K562 (cell line): ENCODE measurements at regions of chr9 and their contacts with region 1.

Region 1: GRCh38 chr9:108761655-108762347 is 94.0 kb downstream of the ACTL7B start:
- DNase-seq: peak; percentile 65 to 81 (median 78)
- ATAC-seq: peak; percentile 94
- H3K4me3 ChIP-seq: no peak overlapping the region
- H3K27ac ChIP-seq: no peak overlapping the region
- H3K4me1 ChIP-seq: no peaks in the 10 kb centered on the region
- H3K27me3 ChIP-seq: peaks cover 2 to 7% of the 10 kb centered on the region in 2 experiments; a peak in 3 of 5 replicates
- CTCF ChIP-seq: peak; percentile 67 to 92 (median 91)
- EP300 ChIP-seq: no peak
- POLR2A ChIP-seq: no peak
- RAD21 ChIP-seq: peak; percentile 70 to 84

Region 2: GRCh38 chr9:107425101-107426045 is 1336.4 kb before region 1 on chr9:
- CTCF ChIA-PET with region 1: no interaction called
- POLR2A ChIA-PET with region 1: no interaction called
- in situ Hi-C with region 1: loop called (anchors 10 kb)
- intact Hi-C with region 1: loop called (anchors 5 kb)
- DNase-seq: peak; percentile 54 to 73 (median 66)
- ATAC-seq: peak; percentile 93
- H3K4me3 ChIP-seq: no peak overlapping the region
- H3K27ac ChIP-seq: no peak overlapping the region
- H3K4me1 ChIP-seq: peaks cover 0 to 7% of the 10 kb centered on the region in 2 experiments; a peak in 2 of 5 replicates
- H3K27me3 ChIP-seq: peaks cover 3 to 25% of the 10 kb centered on the region in 2 experiments; a peak in 4 of 5 replicates
- CTCF ChIP-seq: peak; percentile 72 to 93 (median 74); a peak in 5 of 6 replicates
- EP300 ChIP-seq: no peak
- POLR2A ChIP-seq: no peak
- RAD21 ChIP-seq: peak in 1 of 2 experiments; percentile 52; a peak in 2 of 4 replicates

Region 3: DNA sequence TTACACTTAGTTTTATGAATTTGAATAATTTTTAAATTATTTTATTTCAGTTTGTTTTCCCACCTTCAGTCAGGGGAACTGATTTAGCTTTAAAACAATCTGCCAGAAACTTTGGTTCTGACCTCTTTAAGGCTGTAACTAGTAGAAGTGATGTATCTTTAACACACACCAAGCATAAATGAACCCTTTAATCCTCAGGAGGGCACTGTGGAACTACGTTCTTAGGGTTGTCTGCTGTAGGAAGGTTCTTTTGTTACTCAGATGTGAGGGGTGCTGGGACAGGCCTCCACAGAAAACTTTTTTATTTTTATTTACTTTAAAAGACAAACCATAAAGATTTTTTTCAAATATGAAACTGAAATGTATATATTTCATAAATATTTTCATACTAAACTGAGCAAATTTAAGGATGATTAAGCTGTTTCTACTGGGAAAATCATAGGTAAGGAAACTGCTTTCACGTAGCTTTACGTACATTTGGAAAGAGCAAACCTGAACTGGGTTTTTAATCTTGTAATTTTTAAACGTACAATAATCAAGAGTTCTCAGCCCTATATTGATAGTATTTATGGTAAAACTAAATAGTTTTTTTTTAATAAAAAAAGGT is 1277.6 kb before region 1 on chr9:
- CTCF ChIA-PET with region 1: no interaction called
- POLR2A ChIA-PET with region 1: no interaction called
- in situ Hi-C with region 1: no loop called
- intact Hi-C with region 1: loop called (anchors 5 kb)
- DNase-seq: peak; percentile 27 to 56 (median 40)
- ATAC-seq: peak; percentile 89
- H3K4me3 ChIP-seq: no peak overlapping the region
- H3K27ac ChIP-seq: no peak overlapping the region
- H3K4me1 ChIP-seq: peaks cover 0 to 11% of the 10 kb centered on the region in 2 experiments; a peak in 3 of 5 replicates
- H3K27me3 ChIP-seq: peaks cover 0 to 7% of the 10 kb centered on the region in 2 experiments; a peak in 1 of 5 replicates
- CTCF ChIP-seq: peak; percentile 31 to 66 (median 53); a peak in 5 of 6 replicates
- EP300 ChIP-seq: no peak
- POLR2A ChIP-seq: no peak
- RAD21 ChIP-seq: peak; percentile 84 to 93

Region 4: DNA sequence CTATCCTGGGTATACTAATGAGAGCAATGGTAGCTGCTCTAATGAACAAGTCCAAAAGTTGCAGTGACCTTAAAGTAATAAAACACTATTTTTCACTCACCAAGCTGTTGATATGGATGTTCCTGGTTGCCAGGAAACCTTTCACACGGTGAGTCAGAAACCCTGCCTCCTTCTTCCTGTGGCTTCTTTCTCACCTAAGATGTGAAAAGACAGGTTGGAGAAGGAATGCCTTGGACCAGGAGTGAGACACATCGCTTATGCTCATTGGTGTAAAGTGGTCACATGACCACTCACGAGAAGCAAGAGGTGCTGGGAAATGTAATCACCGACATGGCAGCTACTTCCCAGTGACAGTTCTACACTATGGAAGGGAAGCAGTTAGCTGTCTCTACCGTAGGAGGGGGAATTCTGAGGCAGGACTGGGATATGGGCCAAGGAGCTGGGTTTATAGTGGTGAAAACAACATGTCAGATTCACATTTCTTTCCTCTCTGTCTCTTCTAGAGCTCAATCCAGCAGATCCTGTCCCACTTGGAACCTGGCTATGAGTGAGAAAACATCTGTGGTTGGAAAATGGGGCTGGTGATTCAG is 951.8 kb before region 1 on chr9:
- CTCF ChIA-PET with region 1: no interaction called
- POLR2A ChIA-PET with region 1: no interaction called
- in situ Hi-C with region 1: no loop called
- intact Hi-C with region 1: no loop called
- DNase-seq: peak in 3 of 4 experiments; percentile 20 to 38 (median 22)
- ATAC-seq: peak; percentile 70
- H3K4me3 ChIP-seq: no peak overlapping the region
- H3K27ac ChIP-seq: no peak overlapping the region
- H3K4me1 ChIP-seq: no peaks in the 10 kb centered on the region
- H3K27me3 ChIP-seq: peaks cover 4 to 7% of the 10 kb centered on the region in 2 experiments; a peak in 3 of 5 replicates
- CTCF ChIP-seq: no peak
- EP300 ChIP-seq: no peak
- POLR2A ChIP-seq: no peak
- RAD21 ChIP-seq: no peak

Region 5: DNA sequence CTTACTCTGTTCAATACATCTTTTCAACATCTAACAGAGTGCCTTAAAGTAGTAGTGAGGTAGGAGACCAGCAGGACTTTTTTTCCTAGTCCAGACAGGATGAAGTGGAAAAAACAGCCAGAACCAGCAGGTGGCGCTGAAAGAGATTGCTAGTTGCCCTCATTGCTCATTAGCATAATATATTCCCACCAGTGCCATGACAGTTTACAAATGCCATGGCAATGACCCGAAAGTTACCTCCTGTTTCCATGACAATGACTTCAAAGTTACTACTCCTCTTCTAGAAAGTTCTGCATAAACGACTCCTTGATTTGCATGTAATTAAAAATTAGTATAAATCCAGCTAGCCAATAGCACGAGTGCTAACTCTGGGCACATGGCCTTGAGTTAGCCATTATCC is 293.4 kb before region 1 on chr9:
- CTCF ChIA-PET with region 1: no interaction called
- POLR2A ChIA-PET with region 1: no interaction called
- in situ Hi-C with region 1: no loop called
- intact Hi-C with region 1: loop called (anchors 1 kb)
- DNase-seq: peak; percentile 35 to 67 (median 40)
- ATAC-seq: peak; percentile 98
- H3K4me3 ChIP-seq: no peak overlapping the region
- H3K27ac ChIP-seq: no peak overlapping the region
- H3K4me1 ChIP-seq: 0 out of 5 replicates have a peak, but pooled peaks cover 0 to 2% of the 10 kb centered on the region in 2 experiments
- H3K27me3 ChIP-seq: no peaks in the 10 kb centered on the region
- CTCF ChIP-seq: peak; percentile 59 to 72 (median 72)
- EP300 ChIP-seq: no peak
- POLR2A ChIP-seq: no peak
- RAD21 ChIP-seq: peak in 1 of 2 experiments; percentile 32; a peak in 2 of 4 replicates